Caco-2 (cell line): ENCODE measurements at regions of chr9 and their contacts with region 1.

Region 1: DNA sequence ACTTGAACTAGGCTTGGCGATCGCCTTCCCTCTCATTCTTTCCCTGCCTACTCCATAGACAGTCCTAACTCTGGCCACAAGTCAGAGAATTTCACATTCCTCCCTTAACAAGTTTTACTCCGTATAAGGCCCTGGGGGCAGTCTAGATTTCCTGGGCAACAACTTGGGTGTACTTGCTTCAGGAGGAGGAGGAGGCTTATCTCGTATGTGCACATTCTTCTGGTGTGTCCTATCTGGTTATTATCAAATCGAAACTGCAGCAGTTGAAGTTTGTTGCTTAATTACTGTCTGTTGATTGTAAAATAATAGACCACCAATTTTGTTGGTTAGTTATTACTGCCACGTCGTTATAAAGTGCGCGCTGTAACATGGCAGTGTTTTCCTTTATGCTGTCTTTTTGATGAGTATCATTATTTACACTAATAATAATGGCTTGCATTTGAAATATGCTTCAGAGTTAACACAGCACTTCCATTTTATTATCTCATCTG is 42.0 kb downstream of the PIP5K1B start:
- DNase-seq: peak; percentile 26 to 72
- H3K4me3 ChIP-seq: no peak overlapping the region
- H3K4me3 Mint-ChIP-seq: no peak overlapping the region
- H3K27ac Mint-ChIP-seq: peak overlapping the region; percentile 73
- H3K4me1 ChIP-seq: peaks cover 9% of the 10 kb centered on the region; the same call in 1 of the 2 replicates
- H3K4me1 Mint-ChIP-seq: peaks cover 7% of the 10 kb centered on the region
- H3K27me3 ChIP-seq: no peaks in the 10 kb centered on the region
- H3K27me3 Mint-ChIP-seq: no peaks in the 10 kb centered on the region
- CTCF ChIP-seq: no peak

Region 2: DNA sequence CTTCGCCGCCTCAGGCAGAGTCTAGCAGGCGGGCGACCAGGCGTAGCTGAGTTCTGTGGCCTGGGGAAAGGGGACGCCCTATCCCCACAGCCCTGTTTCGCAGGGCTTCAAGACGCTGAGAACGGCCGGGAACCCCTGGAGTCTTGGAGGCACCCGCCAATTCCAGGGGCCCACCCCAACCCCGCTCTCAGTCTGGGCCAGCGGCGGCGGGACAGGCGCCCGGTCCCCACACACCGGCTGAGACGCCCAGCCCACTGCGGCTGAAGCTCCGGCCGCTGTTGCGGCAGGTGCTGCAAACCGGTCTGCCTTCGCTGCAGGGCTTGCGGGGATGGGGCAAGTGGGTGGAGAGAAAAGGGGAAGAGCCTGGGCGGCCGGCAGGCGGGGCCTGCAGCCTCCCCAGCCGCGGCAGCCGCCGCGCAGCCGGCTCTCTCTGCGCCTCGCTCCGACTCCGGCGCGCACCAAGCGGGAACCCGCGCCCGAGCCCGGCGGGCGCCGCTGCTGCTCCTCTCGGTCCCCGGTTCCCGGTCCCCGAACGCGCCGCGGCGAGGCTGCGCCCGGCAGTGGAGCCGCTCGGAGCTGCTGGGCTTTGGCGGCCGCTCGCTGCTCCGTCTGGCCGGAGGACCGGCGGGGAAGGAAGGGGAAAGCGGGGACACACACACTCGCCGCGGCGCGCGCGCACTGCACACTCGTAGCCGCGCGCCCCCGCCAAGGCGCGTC is 42.1 kb before region 1 on chr9 and contains the start of gene PIP5K1B:
- CTCF ChIA-PET with region 1: no interaction called
- POLR2A ChIA-PET with region 1: no interaction called
- intact Hi-C with region 1: loop called (anchors 2 kb)
- DNase-seq: peak; percentile 72 to 80
- H3K4me3 ChIP-seq: peak within 1 kb of the TSS; percentile 54
- H3K4me3 Mint-ChIP-seq: peak within 1 kb of the TSS; percentile 88
- H3K27ac Mint-ChIP-seq: peak within 1 kb of the TSS; percentile 57
- H3K4me1 ChIP-seq: no peaks in the 10 kb centered on the region
- H3K4me1 Mint-ChIP-seq: no peaks in the 10 kb centered on the region
- H3K27me3 ChIP-seq: no peaks in the 10 kb centered on the region
- H3K27me3 Mint-ChIP-seq: no peaks in the 10 kb centered on the region
- CTCF ChIP-seq: no peak
- total RNA-seq, gene PIP5K1B: 10.3 and 12.9 TPM in 2 replicates

Region 3: GRCh38 chr9:68779558-68780384 is 32.7 kb after region 1 on chr9:
- CTCF ChIA-PET with region 1: interaction called, 3 read pairs
- POLR2A ChIA-PET with region 1: no interaction called
- intact Hi-C with region 1: loop called (anchors 1 kb)
- DNase-seq: peak; percentile 81 to 82
- H3K4me3 ChIP-seq: peak overlapping the region; percentile 53
- H3K4me3 Mint-ChIP-seq: no peak overlapping the region
- H3K27ac Mint-ChIP-seq: no peak overlapping the region
- H3K4me1 ChIP-seq: no peaks in the 10 kb centered on the region
- H3K4me1 Mint-ChIP-seq: peaks cover 6% of the 10 kb centered on the region
- H3K27me3 ChIP-seq: no peaks in the 10 kb centered on the region
- H3K27me3 Mint-ChIP-seq: no peaks in the 10 kb centered on the region
- CTCF ChIP-seq: no peak